ENCODE measurements at regions of chr4 and their contacts with region 1.

Region 1: GRCh38 chr4:86970426-86971354 is 35.9 kb downstream of the AFF1 start:
- DNase-seq: no peak
- H3K4me3 ChIP-seq: no peak overlapping the region
- H3K27ac ChIP-seq: no peak overlapping the region
- H3K4me1 ChIP-seq: peaks cover 79% of the 10 kb centered on the region
- CTCF ChIP-seq: no peak

Region 2: GRCh38 chr4:86879641-86880040 is 91.0 kb before region 1 on chr4:
- CTCF ChIA-PET with region 1: no interaction called
- POLR2A ChIA-PET with region 1: no interaction called
- intact Hi-C with region 1: no loop called
- DNase-seq: no peak
- H3K4me3 ChIP-seq: no peak overlapping the region
- H3K27ac ChIP-seq: no peak overlapping the region
- H3K4me1 ChIP-seq: no peaks in the 10 kb centered on the region
- CTCF ChIP-seq: no peak

Region 3: DNA sequence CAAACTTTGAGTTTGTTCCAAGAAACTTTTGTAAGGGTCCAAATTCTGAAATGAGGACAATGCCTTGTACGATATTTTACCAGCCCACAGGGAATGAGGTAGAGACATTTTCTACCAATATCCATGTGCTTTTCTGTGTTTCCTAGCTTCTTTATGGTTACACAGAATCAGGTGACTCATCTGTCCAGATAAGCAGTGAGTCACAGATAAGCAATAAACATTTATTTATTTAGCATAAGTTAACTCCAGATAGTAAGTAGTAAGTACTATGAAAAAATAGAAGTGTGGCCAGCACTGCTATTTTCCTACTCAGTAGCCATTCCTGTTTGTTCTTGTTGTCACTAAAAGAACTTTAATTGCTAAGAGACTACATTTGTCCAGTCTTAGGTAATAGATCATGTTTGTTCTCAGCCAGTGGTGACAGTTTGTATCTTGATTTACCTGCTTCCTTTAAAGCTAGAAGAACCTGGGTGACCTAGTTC is 28.5 kb before region 1 on chr4:
- CTCF ChIA-PET with region 1: no interaction called
- POLR2A ChIA-PET with region 1: interaction called, 13 read pairs
- intact Hi-C with region 1: no loop called
- DNase-seq: no peak
- H3K4me3 ChIP-seq: no peak overlapping the region
- H3K27ac ChIP-seq: no peak overlapping the region
- H3K4me1 ChIP-seq: peaks cover 92% of the 10 kb centered on the region
- CTCF ChIP-seq: no peak

Region 4: GRCh38 chr4:87093443-87094123 is 122.9 kb after region 1 on chr4:
- CTCF ChIA-PET with region 1: no interaction called
- POLR2A ChIA-PET with region 1: no interaction called
- intact Hi-C with region 1: no loop called
- DNase-seq: peak; percentile 80
- H3K4me3 ChIP-seq: no peak overlapping the region
- H3K27ac ChIP-seq: no peak overlapping the region
- H3K4me1 ChIP-seq: peaks cover 22% of the 10 kb centered on the region
- CTCF ChIP-seq: peak; percentile 88

Region 5: DNA sequence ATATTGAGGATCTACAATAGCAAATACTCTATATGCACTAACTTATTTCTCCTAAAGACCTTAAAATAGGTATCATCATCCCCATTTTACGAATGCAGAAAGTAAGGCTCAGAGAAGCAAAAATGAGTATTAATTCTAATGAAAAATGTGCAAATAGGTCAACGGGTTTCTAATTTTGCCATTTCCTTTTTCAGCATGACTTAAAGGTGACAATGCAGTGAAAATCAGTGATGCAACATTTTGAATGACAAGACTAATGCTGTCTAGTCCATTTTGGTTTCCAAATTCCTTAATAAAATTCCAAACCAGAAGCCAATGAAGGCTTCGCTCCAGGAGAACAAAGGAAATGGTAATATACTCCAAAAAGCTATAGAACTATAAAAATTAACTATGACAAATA is 791.6 kb after region 1 on chr4:
- CTCF ChIA-PET with region 1: no interaction called
- POLR2A ChIA-PET with region 1: no interaction called
- intact Hi-C with region 1: no loop called
- DNase-seq: no peak
- H3K4me3 ChIP-seq: no peak overlapping the region
- H3K27ac ChIP-seq: no peak overlapping the region
- H3K4me1 ChIP-seq: no peaks in the 10 kb centered on the region
- CTCF ChIP-seq: no peak

Measured in OCI-LY7 (cell line).